ENCODE measurements at regions of chr17 and their contacts with region 1.

Region 1: DNA sequence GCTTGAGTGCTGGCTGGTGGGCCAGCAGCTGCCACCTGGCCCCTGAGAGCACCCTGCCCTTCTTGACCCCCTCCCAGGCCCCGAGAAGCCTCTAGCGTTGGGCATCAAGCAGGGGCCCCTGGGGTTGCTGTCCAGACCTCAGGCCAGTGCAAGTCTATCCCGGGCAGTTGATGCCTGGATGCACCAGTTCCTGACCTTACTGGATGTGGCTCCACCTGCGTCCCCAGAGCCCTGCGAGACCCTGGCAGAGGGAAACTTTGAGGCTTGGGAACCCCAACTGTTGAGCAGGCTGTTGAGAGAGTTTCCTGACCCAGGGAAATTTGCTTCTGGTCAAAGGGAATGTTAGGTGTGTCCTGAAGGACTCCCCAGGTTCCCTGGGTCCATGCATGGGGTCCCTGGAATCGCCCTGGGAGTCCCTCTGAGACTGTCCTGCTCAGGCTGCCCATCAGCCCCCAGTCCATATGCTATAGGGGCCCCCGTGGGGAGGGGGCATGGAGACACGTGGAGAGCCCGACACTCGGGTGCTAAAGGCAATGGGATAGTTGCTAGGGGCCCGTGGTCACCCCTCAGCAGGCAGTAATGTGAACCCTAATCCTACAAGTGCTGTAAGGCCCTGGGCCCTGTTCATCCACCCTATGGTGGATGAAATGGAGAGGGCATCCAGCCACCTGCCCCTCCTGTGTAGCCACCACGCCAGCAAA is 46.4 kb downstream of the RAB11FIP4 start:
- DNase-seq: no peak
- ATAC-seq: no peak
- H3K4me3 ChIP-seq: no peak overlapping the region
- H3K27ac ChIP-seq: no peak overlapping the region
- H3K4me1 ChIP-seq: no peaks in the 10 kb centered on the region
- H3K27me3 ChIP-seq: no peaks in the 10 kb centered on the region
- CTCF ChIP-seq: no peak

Region 2: GRCh38 chr17:31842183-31843069 is 404.6 kb after region 1 on chr17:
- CTCF ChIA-PET with region 1: no interaction called
- POLR2A ChIA-PET with region 1: no interaction called
- intact Hi-C with region 1: loop called (anchors 5 kb)
- DNase-seq: peak; percentile 64
- ATAC-seq: peak; percentile 88
- H3K4me3 ChIP-seq: peak overlapping the region; percentile 58
- H3K27ac ChIP-seq: no peak overlapping the region
- H3K4me1 ChIP-seq: peaks cover 15% of the 10 kb centered on the region
- H3K27me3 ChIP-seq: no peaks in the 10 kb centered on the region
- CTCF ChIP-seq: peak; percentile 85

Measured in PC-3 (cell line).